Right ventricle myocardium inferior (tissue), 1 donor: ENCODE measurements at regions of chr16 and their contacts with region 1.

Region 1: DNA sequence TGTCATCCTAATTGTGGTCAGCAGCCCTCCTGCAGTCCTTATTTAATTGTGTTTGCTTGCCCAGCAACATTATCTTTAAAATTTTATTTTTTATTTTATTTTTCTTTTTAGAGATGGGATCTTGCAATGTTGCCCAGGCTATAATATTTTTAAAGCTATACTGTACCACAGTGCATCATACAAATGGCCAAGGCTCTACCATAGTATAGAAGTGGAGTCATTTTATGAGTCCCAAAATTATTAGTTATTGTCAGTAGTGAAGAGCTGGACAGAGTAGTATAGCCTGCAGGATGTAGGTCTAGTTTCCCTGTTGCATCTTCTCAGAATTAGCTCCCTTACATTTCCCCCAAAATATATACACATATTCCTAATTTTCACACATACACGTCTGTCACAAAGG is 44.1 kb downstream of the GAN start:
- DNase-seq: no peak
- ATAC-seq: no peak

Region 2: DNA sequence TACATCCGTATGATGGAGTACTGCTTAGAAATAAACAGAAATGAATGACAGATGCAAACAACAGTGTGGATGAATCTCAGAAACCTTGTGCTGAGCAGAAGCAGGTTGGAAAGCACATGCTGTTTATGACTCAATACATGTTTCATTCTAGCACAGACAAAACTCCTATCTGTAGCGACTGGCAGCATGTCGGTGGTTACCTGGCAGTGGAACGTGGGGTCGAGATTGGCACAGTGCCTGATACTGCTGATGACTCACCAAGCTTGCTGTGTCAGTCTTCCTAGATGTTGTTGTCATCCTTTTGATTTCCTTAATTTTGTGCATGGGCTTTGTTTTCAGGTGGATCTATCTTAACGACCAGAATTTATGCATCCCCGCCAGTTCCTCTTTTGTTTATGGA is 18.0 kb after region 1 on chr16:
- intact Hi-C with region 1: loop called (anchors 1 kb)
- DNase-seq: no peak
- ATAC-seq: no peak